ENCODE measurements at regions of chr9 and their contacts with region 1.

Region 1: GRCh38 chr9:111348821-111349271 is 18.8 kb upstream of the OR2K2 start:
- DNase-seq: peak; percentile 35
- ATAC-seq: no peak
- H3K4me3 ChIP-seq: no peak overlapping the region
- H3K27ac ChIP-seq: no peak overlapping the region
- H3K4me1 ChIP-seq: no peaks in the 10 kb centered on the region
- H3K27me3 ChIP-seq: no peaks in the 10 kb centered on the region
- CTCF ChIP-seq: no peak
- POLR2A ChIP-seq: no peak
- RAD21 ChIP-seq: no peak

Region 2: DNA sequence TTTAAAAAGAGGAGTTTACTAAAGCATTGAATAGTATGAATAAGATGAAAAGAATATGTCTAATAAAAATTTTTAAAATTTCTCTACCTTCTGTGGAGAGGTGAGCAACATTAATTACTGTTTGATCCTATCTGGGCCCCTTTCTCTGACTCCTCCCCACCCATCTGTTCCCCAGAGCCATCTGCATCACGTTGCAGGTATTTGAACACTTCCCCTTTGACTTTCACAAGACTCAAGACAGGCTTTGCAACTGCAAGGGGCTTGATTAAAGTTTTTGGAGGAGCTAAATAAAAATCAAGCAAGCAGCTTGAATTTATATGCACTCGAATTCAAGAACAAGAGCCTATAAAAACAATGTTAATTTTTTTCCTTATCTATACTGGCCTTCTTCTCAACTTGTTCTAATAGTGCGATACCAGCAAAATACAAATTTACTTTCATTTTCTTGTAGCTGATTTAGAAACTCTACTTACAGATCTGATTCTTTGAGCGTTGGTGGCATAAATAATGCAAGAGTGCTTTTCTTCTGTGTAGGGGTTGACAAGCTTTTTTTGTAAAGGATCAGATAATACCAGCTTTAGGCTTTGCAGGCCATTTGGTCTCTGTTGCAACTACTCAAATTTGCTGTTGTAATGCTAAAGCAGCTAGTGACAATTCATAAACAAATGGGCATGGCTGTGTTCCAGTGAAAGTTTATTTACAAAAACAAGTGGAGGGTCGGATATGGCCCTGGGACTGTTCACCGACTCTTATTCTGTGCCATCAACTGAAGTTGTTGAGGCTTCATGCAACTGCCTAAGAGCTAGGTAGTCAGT is 1032.4 kb before region 1 on chr9:
- CTCF ChIA-PET with region 1: no interaction called
- POLR2A ChIA-PET with region 1: no interaction called
- dilution Hi-C with region 1: no loop called
- in situ Hi-C with region 1: loop called (anchors 25 kb)
- intact Hi-C with region 1: no loop called
- DNase-seq: no peak
- ATAC-seq: no peak
- H3K4me3 ChIP-seq: no peak overlapping the region
- H3K27ac ChIP-seq: no peak overlapping the region
- H3K4me1 ChIP-seq: no peaks in the 10 kb centered on the region; the same call in 1 of the 2 replicates
- H3K27me3 ChIP-seq: 0 out of 2 replicates have a peak, but pooled peaks cover 4% of the 10 kb centered on the region
- CTCF ChIP-seq: no peak
- POLR2A ChIP-seq: no peak
- RAD21 ChIP-seq: no peak

Region 3: DNA sequence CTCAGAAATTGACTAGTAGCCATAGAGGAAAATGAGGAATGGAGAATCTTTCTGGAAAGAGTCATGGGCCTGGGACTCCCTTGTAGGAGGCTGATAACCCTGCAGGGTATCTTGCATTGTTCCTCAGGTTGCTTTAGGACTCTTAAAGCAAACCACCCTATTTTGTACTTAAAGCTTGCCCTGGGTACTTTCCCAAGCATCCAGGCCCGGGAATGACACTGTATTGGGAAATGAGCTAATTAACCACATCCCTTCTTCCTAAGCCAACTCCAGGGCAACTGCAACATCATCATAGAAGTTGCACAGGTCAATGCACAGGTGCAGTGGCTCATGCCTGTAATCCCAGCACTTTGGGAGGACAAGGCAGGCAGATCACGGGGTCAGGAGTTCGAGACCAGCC is 603.7 kb after region 1 on chr9:
- CTCF ChIA-PET with region 1: no interaction called
- POLR2A ChIA-PET with region 1: no interaction called
- dilution Hi-C with region 1: no loop called
- in situ Hi-C with region 1: no loop called
- intact Hi-C with region 1: no loop called
- DNase-seq: peak; percentile 96
- ATAC-seq: peak; percentile 48
- H3K4me3 ChIP-seq: no peak overlapping the region
- H3K27ac ChIP-seq: no peak overlapping the region
- H3K4me1 ChIP-seq: peaks cover 5% of the 10 kb centered on the region
- H3K27me3 ChIP-seq: no peaks in the 10 kb centered on the region
- CTCF ChIP-seq: no peak
- POLR2A ChIP-seq: no peak
- RAD21 ChIP-seq: no peak

Measured in IMR-90 (cell line).